AG04450 (cell line): ENCODE measurements at regions of chr17 and their contacts with region 1.

Region 1: GRCh38 chr17:63497708-63498483 is 21.0 kb downstream of the ACE start:
- DNase-seq: no peak
- H3K4me3 ChIP-seq: no peak overlapping the region
- H3K27ac ChIP-seq: peak overlapping the region; percentile 95
- H3K27me3 ChIP-seq: no peaks in the 10 kb centered on the region
- CTCF ChIP-seq: peak; percentile 30

Region 2: DNA sequence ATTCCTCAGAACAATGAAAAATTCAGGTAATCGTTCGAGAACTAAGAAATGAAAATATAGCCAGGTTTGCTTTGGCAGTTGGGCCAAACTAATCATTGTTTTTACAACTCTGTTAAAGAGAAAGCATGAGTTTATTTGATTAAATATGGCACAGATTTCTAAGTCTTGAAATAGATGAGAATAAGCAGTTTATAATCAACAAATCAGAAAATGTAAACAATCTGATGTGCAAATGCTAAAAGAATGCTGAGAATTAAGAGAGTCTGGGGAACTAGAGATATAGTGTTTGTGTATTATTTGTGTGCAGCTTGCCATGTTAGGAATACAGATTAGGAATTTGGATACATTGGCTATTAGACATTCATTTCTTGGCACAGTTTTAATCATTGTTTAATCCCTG is 319.4 kb before region 1 on chr17:
- CTCF ChIA-PET with region 1: no interaction called
- POLR2A ChIA-PET with region 1: no interaction called
- DNase-seq: peak; percentile 33
- H3K4me3 ChIP-seq: no peak overlapping the region
- H3K27ac ChIP-seq: peak overlapping the region; percentile 71
- H3K27me3 ChIP-seq: no peaks in the 10 kb centered on the region
- CTCF ChIP-seq: no peak

Region 3: GRCh38 chr17:63478791-63479494 is 19.0 kb before region 1 on chr17:
- CTCF ChIA-PET with region 1: interaction called, 14 read pairs
- POLR2A ChIA-PET with region 1: interaction called, 3 read pairs
- DNase-seq: peak; percentile 74
- H3K4me3 ChIP-seq: no peak overlapping the region
- H3K27ac ChIP-seq: no peak overlapping the region
- H3K27me3 ChIP-seq: peaks cover 10% of the 10 kb centered on the region
- CTCF ChIP-seq: peak; percentile 88

Region 4: DNA sequence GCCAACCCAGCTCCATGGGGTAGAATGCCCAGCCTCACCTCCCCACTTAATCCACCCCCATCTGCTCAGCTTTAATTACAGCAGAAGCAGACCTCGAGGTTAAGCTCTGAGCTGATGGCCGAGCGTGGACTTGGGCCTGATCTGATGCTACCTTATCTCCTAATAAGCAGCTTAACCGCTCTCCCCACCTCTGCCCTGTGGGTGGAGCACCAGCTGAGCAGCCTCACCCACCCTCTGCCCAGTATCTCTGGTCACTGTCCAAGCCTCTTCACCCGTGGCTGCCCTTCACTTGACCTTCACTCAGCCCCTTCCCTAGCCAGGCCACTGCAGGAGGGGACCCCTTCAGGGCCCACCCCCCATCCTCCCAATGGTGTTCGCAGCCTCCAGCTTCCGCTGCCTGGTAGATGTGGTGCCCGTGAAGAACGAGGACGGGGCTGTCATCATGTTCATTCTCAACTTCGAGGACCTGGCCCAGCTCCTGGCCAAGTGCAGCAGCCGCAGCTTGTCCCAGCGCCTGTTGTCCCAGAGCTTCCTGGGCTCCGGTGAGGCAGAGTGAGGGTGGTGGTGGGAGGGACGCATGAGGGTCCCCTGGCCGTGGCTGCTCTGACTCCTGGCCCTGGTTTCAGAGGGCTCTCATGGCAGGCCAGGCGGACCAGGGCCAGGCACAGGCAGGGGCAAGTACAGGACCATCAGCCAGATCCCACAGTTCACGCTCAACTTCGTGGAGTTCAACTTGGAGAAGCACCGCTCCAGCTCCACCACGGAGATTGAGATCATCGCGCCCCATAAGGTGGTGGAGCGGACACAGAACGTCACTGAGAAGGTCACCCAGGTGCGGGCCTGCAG is 32.0 kb after region 1 on chr17:
- CTCF ChIA-PET with region 1: no interaction called
- POLR2A ChIA-PET with region 1: no interaction called
- DNase-seq: no peak
- H3K4me3 ChIP-seq: no peak overlapping the region
- H3K27ac ChIP-seq: no peak overlapping the region
- H3K27me3 ChIP-seq: peaks cover 33% of the 10 kb centered on the region
- CTCF ChIP-seq: no peak